Mammary epithelial cell (primary cell): ENCODE measurements at regions of chr10 and their contacts with region 1.

Region 1: DNA sequence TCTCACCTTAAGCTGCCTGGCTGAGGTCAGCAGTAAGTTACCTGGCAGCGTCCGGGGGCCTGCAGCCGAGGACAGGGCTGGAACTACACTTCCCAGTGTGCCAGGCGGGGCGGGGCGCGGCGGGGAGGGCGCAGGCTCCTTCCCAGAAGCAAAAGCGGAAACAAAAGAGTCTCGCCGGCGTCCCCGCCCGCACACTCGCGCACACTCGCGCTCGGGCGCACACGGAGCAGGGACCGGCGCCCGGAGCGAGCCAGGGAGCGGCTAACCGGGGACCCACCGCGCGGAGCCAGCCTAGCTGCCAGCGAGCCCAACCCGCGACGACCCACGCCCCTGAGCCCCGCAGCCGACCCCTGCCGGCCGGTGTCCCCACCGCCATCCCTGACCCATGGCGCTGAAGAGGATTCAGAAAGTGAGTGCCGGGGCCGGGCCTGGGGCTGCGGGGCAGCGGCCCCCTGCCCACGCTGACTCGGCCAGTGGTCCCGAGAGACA is at the start of gene UBE2D1:
- DNase-seq: peak; percentile 74
- H3K4me3 ChIP-seq: peak within 1 kb of the TSS; percentile 83 to 95 (median 93)
- H3K27ac ChIP-seq: peak within 1 kb of the TSS; percentile 74
- H3K4me1 ChIP-seq: peaks cover 6% of the 10 kb centered on the region
- H3K27me3 ChIP-seq: no peaks in the 10 kb centered on the region
- CTCF ChIP-seq: no peak
- total RNA-seq, gene UBE2D1: 13.9 to 15.5 TPM

Region 2: DNA sequence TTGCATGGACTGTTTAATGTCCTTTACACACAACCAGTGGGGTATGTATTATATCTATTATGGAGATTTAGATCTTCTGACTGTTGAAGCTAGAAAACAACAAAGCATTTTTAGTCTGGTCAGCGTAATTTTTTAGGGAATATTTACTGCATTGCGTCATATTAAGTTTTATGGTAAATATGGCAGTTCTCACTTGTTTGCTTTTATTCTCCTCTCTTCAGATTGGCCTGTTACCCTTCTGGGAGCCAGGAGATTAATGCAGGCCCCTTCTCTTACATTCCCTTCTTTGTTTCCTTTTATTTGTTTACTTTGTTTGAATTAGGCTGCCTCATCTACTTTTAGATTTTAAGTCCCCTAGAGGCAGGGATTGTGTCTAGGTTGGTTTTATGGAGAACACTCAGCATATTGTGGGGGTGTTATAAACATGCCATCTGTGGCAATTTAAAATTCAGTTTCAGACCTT is 13.7 kb after region 1 on chr10:
- CTCF ChIA-PET with region 1: no interaction called
- dilution Hi-C with region 1: no loop called
- in situ Hi-C with region 1: no loop called
- intact Hi-C with region 1: no loop called
- DNase-seq: no peak
- H3K4me3 ChIP-seq: no peak overlapping the region
- H3K27ac ChIP-seq: no peak overlapping the region
- H3K4me1 ChIP-seq: no peaks in the 10 kb centered on the region
- H3K27me3 ChIP-seq: no peaks in the 10 kb centered on the region
- CTCF ChIP-seq: no peak

Region 3: DNA sequence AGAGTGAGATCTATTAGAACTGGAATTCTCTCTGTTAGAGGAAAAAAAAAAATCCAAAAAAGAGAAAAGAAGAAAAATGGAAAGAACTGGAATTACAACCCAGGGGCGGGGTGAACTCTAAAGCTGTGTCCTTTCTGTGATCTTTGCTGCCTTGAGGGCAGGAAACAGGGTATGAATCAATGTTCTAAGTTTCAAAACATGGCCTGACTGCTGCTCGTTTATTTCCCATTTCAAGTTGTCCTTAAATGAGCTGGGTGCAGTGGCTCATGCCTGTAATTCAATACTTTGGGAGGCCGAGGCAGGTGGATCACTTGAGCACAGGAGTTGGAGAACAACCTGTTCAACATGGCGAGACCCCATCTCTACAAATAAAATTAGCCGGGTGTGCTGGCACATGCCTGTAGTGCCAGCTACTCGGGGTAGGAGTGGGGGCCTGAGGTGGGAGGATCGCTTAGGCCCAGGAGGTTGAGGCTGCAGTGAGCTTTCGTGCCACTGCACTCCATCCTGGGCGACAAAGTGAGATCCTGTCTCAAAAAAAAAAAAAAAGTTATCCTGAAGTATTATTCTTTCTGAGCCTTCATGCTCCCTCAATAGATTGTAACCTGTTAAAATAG is 25.6 kb after region 1 on chr10:
- CTCF ChIA-PET with region 1: no interaction called
- dilution Hi-C with region 1: no loop called
- in situ Hi-C with region 1: no loop called
- intact Hi-C with region 1: loop called (anchors 2 kb)
- DNase-seq: peak; percentile 57
- H3K4me3 ChIP-seq: no peak overlapping the region
- H3K27ac ChIP-seq: no peak overlapping the region
- H3K4me1 ChIP-seq: peaks cover 24% of the 10 kb centered on the region
- H3K27me3 ChIP-seq: no peaks in the 10 kb centered on the region
- CTCF ChIP-seq: no peak

Region 4: DNA sequence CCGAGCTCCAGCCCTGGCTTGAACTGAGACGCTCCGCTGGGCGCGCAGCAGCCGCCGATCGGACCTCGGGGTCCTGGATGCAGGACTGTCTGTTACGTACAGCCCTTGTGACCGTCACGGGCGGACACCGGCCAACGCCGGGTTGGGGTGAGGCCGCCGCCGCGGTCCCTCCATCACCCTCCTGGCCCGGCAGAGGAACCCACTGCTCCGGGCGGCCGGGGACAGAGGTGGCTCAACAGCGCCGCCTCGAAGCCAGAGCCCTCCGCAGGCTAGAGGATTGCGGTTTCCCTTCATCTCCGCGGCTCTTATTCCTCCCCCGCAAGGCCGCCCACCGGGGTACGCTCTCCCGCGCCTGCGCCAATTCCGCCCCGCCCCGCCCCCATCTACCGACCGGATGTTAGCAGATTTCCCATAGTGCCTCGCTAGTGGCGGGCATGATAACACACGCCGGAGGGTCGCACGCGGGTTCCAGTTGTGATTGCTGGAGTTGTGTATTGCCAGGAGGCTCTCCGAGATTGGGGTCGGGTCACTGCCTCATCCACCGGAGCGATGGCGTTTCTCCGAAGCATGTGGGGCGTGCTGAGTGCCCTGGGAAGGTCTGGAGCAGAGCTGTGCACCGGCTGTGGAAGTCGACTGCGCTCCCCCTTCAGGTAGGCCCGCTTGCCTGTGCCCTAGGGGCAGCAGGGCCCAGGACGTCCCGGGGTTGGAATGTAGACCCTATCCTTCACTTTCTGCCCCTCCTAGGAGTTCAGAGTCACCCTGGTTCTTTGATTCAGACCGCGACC is 50.3 kb after region 1 on chr10 and contains the start of gene TFAM:
- CTCF ChIA-PET with region 1: no interaction called
- dilution Hi-C with region 1: no loop called
- in situ Hi-C with region 1: no loop called
- intact Hi-C with region 1: loop called (anchors 2 kb)
- DNase-seq: peak; percentile 91
- H3K4me3 ChIP-seq: peak within 1 kb of the TSS; percentile 73 to 94 (median 76)
- H3K27ac ChIP-seq: peak within 1 kb of the TSS; percentile 63
- H3K4me1 ChIP-seq: peaks cover 16% of the 10 kb centered on the region
- H3K27me3 ChIP-seq: no peaks in the 10 kb centered on the region
- CTCF ChIP-seq: peak; percentile 29 to 72
- total RNA-seq, gene TFAM: 26.2 to 46.3 TPM

Region 5: GRCh38 chr10:58662314-58662713 is 327.5 kb after region 1 on chr10:
- CTCF ChIA-PET with region 1: no interaction called
- dilution Hi-C with region 1: no loop called
- in situ Hi-C with region 1: no loop called
- intact Hi-C with region 1: no loop called
- DNase-seq: peak; percentile 90
- H3K4me3 ChIP-seq: peak overlapping the region in 1 of 3 experiments; percentile 19
- H3K27ac ChIP-seq: peak overlapping the region; percentile 95
- H3K4me1 ChIP-seq: peaks cover 44% of the 10 kb centered on the region
- H3K27me3 ChIP-seq: no peaks in the 10 kb centered on the region
- CTCF ChIP-seq: no peak